SK-N-SH (cell line): ENCODE measurements at regions of chr15 and their contacts with region 1.

Region 1: DNA sequence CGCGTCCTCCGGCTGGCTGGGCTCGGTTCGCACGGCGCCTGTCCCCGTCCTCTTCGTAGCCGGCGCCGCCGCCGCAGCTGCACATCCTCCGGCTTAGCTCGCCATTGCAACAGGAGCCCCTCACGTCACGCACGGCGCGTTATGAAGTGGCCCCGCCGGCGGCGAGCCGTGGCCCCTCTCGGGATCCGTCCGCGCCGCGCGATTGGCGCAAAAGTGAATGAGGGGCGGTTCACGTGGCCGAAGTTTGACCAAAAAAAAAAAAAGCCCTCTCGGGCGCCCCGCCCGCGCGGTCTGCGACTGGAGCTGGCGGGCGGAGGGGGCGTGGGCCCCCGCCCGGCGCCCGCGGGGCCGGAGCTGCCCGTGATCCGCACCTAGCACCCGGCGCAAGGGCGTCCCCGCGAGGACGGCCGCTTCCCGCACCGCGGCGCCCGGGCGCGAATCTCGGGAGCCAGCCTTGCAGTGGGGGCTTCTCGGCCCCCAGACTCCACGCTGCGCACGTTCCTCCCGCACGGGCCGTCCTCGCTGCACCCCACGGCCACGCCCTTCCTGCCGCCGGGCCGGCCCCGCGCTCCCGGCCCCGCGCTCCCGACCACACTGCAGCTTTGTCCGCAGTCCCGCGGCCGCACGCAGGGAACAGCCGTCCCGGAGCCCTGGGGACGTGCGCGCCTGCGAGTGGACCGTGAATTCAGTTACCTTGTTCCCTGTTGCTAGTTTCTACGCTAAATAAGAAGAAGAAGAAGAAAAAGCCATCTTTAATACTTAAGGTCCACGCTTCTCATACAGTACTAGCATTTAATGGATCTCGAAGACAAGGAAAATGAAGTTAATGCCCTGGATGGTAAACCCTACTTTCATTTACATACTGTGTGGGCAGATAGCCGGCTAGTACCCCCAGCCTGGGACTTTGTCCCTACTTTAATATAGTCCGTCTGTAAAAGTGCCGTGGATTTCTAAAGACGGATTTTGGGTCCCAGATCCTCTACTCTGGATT is at the start of gene CHSY1:
- DNase-seq: peak; percentile 94
- H3K4me3 ChIP-seq: peak within 1 kb of the TSS; percentile 69 to 89
- H3K27ac ChIP-seq: peak within 1 kb of the TSS; percentile 52 to 90
- H3K4me1 ChIP-seq: peaks cover 4 to 27% of the 10 kb centered on the region in 2 experiments; a peak in 2 of 4 replicates
- H3K27me3 ChIP-seq: no peaks in the 10 kb centered on the region
- CTCF ChIP-seq: peak; percentile 18; the same call in 1 of the 2 replicates
- EP300 ChIP-seq: peak in 1 of 2 experiments; percentile 32; a peak in 2 of 4 replicates
- RAD21 ChIP-seq: peak; percentile 47
- polyA plus RNA-seq, gene CHSY1: 15.7 and 17.4 TPM in 2 replicates

Region 2: DNA sequence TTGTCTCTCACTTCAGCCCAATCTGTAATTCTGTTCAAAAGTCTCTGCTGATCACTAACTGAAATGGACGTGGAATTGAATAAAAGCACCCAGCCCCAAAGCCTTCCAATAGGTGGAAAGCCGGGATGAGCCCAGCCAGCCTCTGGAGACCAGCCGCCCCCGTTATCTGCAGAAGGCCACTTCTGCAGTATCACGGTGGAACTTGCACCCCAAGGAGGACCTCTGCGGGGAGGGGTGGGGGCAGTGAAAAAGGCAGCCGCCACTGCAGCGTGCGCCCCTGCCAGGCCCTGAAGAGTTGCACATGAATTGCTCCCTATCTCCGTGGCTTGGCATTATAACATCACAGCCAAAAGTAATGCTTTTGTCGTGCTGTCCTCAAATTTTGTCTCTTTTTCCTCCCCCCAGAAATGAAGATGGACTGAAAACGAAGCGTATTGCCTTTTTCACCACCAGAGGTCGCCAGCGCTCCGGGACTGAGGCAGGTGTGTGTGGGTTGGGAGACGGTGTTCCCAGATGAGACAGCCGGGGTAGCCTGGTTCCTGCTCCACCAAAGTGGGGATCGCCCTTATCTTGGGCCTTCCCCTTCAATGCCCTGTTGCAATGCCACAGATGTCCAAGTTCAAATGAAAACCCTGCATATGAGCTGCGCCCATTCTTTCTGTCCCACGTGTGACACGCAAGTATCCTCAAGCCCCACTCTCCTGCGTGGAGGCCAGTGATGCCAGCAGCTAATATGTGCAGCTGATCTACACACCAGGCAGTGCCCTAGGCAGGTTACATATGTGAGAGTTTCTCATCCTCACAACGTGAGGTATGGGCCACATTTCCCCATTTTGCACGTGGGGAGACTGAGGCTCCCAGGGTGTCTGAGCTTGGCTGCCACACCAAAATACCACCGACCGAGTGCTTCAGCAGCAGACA is 236.9 kb before region 1 on chr15:
- CTCF ChIA-PET with region 1: interaction called, 87 read pairs
- POLR2A ChIA-PET with region 1: interaction called, 3 read pairs
- DNase-seq: peak; percentile 91
- H3K4me3 ChIP-seq: no peak overlapping the region
- H3K27ac ChIP-seq: no peak overlapping the region
- H3K4me1 ChIP-seq: peaks cover 0 to 7% of the 10 kb centered on the region in 2 experiments; a peak in 1 of 4 replicates
- H3K27me3 ChIP-seq: no peaks in the 10 kb centered on the region
- CTCF ChIP-seq: peak; percentile 93
- EP300 ChIP-seq: no peak
- RAD21 ChIP-seq: peak; percentile 96

Region 3: DNA sequence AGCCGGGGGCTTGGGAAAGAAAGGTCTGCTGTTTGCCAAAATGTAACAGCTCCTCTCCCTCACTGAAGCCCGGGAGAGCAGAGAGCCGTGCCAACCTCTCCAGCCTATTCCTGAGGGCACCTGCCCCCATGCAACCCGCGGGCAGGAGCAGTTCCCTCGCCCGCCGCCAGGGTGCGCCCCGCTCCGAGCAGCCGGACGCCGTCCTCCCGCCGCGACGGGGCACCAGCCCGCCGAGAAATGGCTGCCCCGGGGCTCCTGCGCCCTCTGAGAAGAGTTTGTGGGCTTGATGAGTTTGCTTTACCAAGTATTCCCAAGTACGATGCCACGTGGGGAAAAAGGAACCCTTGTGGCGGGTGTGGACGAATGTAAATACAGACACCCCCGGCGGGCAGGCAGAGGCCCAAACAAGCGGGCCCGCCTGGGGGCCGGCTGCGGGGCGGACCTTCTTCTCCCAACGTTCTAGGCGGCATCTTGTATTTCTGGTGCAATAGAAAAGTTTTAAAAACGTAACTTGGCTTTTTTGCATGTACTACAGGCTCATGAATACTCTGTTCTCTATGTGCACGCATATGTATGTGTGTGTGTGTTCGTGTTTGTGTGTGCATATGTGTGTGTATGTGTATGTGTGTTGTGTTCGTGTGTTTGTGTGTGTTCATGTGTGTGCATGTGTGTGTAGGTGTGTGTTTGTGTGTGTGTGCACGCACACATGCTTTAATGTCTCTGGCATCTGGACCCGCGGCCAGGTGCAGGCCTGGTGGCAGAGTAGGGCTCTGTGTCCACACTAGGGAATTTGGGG is 163.1 kb before region 1 on chr15:
- CTCF ChIA-PET with region 1: interaction called, 190 read pairs
- POLR2A ChIA-PET with region 1: interaction called, 3 read pairs
- DNase-seq: peak; percentile 93
- H3K4me3 ChIP-seq: peak overlapping the region in 1 of 2 experiments; percentile 41; a peak in 1 of 4 replicates
- H3K27ac ChIP-seq: no peak overlapping the region
- H3K4me1 ChIP-seq: peaks cover 0 to 26% of the 10 kb centered on the region in 2 experiments; a peak in 1 of 4 replicates
- H3K27me3 ChIP-seq: no peaks in the 10 kb centered on the region
- CTCF ChIP-seq: peak; percentile 91
- EP300 ChIP-seq: no peak
- RAD21 ChIP-seq: peak; percentile 84

Region 4: GRCh38 chr15:101112336-101113113 is 139.6 kb before region 1 on chr15:
- CTCF ChIA-PET with region 1: interaction called, 10 read pairs
- POLR2A ChIA-PET with region 1: interaction called, 3 read pairs
- DNase-seq: no peak
- H3K4me3 ChIP-seq: no peak overlapping the region
- H3K27ac ChIP-seq: no peak overlapping the region
- H3K4me1 ChIP-seq: peaks cover 0 to 14% of the 10 kb centered on the region in 2 experiments; a peak in 1 of 4 replicates
- H3K27me3 ChIP-seq: no peaks in the 10 kb centered on the region
- CTCF ChIP-seq: no peak
- EP300 ChIP-seq: no peak
- RAD21 ChIP-seq: no peak

Region 5: DNA sequence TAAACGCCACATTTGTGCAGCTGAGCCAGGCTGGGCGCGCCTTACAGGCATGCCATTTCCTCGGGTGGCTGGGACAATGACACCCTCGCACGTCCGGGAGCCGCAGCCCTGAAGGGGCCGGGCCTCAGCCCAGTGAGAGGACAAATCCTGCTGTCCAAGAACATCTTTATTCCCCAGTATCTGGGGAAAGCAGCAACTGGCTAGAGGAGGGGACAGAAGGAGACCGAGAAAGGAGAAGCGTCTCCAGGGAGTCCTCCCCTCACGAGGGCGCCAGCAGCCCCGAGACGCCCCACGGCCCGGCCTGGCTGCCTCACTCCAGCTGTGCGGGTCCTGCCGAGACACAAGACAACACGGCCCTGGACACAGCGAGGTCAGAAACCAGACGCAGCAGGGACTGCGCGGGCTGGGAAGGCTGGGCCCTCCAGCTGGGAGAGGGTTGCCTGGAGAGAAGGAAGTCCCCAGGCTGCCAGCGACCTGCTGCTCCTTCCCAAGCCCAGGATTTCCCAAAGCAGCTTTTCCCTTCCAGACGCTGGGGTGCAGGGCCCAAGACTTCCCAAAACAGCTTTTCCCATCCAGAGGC is 130.5 kb before region 1 on chr15:
- CTCF ChIA-PET with region 1: interaction called, 24 read pairs
- POLR2A ChIA-PET with region 1: interaction called, 7 read pairs
- DNase-seq: peak; percentile 91
- H3K4me3 ChIP-seq: no peak overlapping the region; a peak in 1 of 4 replicates
- H3K27ac ChIP-seq: peak overlapping the region; percentile 28 to 98; a peak in 3 of 4 replicates
- H3K4me1 ChIP-seq: peaks cover 10 to 37% of the 10 kb centered on the region in 2 experiments
- H3K27me3 ChIP-seq: no peaks in the 10 kb centered on the region
- CTCF ChIP-seq: peak; percentile 40; the same call in 1 of the 2 replicates
- EP300 ChIP-seq: peak in 1 of 2 experiments; percentile 67; a peak in 2 of 4 replicates
- RAD21 ChIP-seq: peak; percentile 73

Region 6: DNA sequence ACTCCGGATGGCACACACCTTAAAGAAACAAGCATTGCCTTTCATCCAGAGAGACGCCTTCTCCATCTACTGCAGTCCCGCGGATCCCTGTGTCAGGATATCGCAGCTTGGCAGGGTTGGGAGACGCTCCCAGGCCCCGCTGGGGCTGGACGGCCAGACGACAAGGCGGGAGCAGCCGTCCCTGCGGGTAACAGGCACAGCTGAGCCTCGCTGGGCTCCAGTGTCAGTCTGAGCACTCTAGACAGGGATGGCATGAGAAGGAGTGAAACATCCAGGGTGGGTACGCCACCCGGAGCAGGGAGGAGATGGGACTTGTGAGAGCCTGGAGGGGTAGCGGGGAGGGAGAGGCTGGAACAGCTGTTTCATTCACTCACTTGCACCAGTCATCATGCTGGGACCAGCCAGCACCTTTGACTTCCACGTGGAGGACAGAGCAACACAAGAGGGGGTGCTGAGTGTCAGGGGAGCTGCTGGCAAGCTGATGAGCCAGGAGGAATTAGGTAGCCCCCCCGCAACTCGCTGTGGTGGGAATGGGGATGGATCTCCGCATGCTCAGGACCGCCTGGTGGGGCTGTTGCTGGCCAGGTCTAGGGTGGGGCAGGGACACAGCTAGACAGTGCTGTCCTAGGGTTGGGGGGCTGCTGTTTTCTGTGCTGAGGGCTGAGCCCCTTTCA is 74.5 kb after region 1 on chr15:
- CTCF ChIA-PET with region 1: no interaction called
- POLR2A ChIA-PET with region 1: no interaction called
- DNase-seq: no peak
- H3K4me3 ChIP-seq: no peak overlapping the region
- H3K27ac ChIP-seq: no peak overlapping the region
- H3K4me1 ChIP-seq: no peaks in the 10 kb centered on the region
- H3K27me3 ChIP-seq: peaks cover 8% of the 10 kb centered on the region; the same call in 1 of the 2 replicates
- CTCF ChIP-seq: no peak
- EP300 ChIP-seq: no peak
- RAD21 ChIP-seq: no peak

Region 7: GRCh38 chr15:101489236-101489632 is 237.1 kb after region 1 on chr15:
- CTCF ChIA-PET with region 1: no interaction called
- POLR2A ChIA-PET with region 1: no interaction called
- DNase-seq: peak; percentile 90
- H3K4me3 ChIP-seq: peak overlapping the region in 1 of 2 experiments; percentile 43; a peak in 2 of 4 replicates
- H3K27ac ChIP-seq: no peak overlapping the region
- H3K4me1 ChIP-seq: no peaks in the 10 kb centered on the region; a peak in 1 of 4 replicates
- H3K27me3 ChIP-seq: no peaks in the 10 kb centered on the region
- CTCF ChIP-seq: no peak
- EP300 ChIP-seq: no peak
- RAD21 ChIP-seq: no peak